Calu3 (cell line): ENCODE measurements at regions of chr12 and their contacts with region 1.

Region 1: DNA sequence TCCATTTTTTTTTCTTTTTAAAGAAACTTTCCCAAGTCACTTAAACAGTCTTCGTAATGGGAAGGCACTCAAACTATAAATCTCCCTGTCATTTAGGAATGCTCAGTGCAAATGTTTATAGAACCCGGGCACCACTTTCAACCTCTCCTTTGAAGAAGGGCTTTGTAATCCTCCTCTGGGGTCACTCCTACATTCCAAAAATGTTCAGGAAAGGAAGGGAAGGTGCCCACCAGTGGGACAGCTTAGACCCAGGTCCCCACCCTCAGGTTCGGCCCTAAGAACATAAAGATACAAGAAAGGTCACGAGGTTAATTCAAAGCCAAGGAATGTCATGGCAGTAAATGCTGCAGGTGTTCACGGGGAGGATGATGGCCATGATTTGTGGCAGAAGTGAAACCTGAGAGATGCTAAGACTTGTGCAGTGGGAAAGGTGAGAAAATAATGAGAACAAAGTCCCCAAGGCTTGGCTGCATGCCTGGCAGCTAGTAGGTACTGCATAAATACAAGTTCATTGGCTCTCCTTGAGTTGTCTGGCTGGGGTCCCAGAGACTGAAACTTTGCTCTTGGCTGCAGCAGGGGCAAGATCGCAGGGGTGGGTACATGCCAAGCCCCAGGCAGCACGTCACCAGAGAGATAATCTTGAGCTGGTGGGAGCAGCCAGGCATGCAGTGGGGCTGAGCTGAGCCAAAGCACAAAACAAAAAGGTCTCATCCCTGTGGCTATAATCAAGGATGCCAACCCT is 21.1 kb downstream of the KRT18 start:
- DNase-seq: peak; percentile 51
- H3K4me3 Mint-ChIP-seq: no peak overlapping the region
- H3K27ac Mint-ChIP-seq: peak overlapping the region; percentile 76
- H3K4me1 Mint-ChIP-seq: peaks cover 44% of the 10 kb centered on the region
- H3K27me3 Mint-ChIP-seq: no peaks in the 10 kb centered on the region
- CTCF ChIP-seq: no peak

Region 2: DNA sequence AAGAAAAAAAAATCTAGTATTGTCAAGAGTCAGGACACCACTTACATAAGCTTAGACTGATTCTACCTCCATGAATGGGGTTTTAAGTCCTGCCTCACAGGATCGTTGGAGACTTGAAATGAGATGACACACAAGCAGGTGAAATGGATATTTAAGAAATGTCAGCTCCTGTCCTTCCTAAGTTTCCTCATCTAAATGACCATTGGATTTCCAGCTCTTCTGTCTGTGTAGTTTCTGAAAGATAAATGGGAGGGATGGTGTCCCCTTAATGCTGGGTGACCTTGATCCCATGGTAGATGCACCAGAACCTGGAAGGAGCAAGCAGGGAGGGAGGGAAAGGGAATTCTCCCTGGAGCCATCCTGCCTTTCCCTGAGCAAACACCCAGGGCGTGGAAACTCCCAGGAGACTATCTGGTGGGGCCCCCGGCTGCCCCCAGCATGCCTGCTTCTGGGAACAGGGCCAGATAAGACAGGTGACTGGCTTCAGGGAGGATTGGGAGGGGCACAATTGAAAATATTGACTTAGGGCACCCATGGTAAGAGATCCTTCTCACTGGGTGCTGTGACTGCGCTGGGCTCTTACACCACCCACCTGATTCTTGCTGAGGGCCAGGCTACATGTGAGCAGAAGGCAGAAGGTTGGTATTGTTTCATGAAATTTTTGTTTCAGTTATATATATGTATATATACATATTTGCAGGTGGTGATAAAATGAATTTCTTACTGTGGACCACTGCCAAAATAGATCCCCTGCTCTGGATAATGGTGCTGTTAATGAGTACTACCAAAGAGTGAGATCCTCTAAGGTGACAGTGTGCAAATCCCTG is 74.7 kb before region 1 on chr12:
- CTCF ChIA-PET with region 1: interaction called, 3 read pairs
- intact Hi-C with region 1: loop called (anchors 5 kb)
- DNase-seq: peak; percentile 71
- H3K4me3 Mint-ChIP-seq: peak overlapping the region; percentile 58
- H3K27ac Mint-ChIP-seq: peak overlapping the region; percentile 90
- H3K4me1 Mint-ChIP-seq: peaks cover 31% of the 10 kb centered on the region
- H3K27me3 Mint-ChIP-seq: no peaks in the 10 kb centered on the region
- CTCF ChIP-seq: no peak